Lower leg skin (tissue), 4 donors: ENCODE measurements at regions of chr17 and their contacts with region 1.

Region 1: DNA sequence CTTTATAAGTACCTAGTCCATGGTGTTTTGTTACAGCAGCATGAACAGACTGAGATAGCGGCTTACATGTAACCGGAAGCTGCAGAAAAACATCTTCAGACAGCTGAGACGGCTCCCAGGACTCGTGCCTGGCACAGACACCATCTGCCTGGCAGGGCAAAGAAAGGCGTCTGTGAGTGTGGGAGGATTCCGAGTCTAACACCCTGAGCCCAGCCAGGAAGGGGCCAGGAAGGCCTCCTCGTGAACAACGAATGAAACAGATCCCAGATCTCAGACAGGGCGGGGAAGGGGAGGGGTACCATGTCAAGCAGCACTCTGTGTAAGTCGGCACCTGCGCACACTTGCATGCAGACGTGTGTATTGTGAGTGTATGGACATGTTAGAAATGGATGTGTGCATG is 4.4 kb upstream of the CSNK1D start:
- DNase-seq: no peak
- H3K4me3 ChIP-seq: no peak overlapping the region
- CTCF ChIP-seq: no peak
- POLR2A ChIP-seq: no peak

Region 2: DNA sequence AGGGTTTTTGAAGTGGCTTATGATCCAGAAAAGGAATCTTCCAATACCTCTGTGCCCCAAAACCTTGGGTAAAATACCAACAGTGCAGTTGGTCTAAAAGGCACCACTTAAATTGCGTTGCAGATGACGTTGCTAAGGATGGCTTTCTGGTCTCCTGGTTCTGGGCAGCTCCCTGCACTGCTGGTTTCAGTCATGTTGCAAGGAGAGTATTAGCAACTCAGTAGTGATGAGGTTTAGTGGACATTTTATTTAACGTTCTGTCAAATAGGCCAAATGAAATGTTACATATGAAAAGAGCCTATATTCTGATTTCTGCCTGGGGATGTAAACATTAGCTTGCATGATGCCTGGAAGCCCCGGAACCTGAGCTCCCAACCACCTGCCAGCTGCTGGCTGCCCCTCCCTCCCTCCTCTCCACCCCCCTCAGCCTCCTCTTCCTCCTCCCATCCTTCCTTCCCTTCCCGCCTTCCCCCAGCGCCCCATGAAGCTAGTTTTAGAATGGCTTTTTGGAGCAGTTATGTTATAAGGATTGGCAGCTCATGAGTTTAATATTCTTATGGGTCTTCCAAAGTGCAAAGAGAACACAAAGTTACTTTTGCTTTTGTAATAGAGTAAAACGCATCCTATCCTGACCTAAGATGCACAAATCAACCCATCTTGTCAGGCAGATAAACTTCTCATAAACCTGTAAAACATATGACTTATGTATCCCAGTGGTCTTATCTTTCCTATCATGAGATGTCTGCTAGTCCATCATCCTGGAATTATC is 18.8 kb after region 1 on chr17:
- intact Hi-C with region 1: loop called (anchors 1 kb)
- DNase-seq: no peak
- H3K4me3 ChIP-seq: no peak overlapping the region
- CTCF ChIP-seq: no peak
- POLR2A ChIP-seq: no peak

Region 3: GRCh38 chr17:82450170-82451106 is 172.6 kb after region 1 on chr17 and contains the start of gene CYBC1:
- intact Hi-C with region 1: no loop called
- DNase-seq: peak; percentile 91 to 98
- H3K4me3 ChIP-seq: peak within 1 kb of the TSS; percentile 94
- CTCF ChIP-seq: no peak
- POLR2A ChIP-seq: peak in 1 of 2 donors; percentile 62
- total RNA-seq, gene CYBC1: 32.4 to 48.8 (median 43.5) TPM